Mammary epithelial cell (primary cell): ENCODE measurements at regions of chr15 and their contacts with region 1.

Region 1: DNA sequence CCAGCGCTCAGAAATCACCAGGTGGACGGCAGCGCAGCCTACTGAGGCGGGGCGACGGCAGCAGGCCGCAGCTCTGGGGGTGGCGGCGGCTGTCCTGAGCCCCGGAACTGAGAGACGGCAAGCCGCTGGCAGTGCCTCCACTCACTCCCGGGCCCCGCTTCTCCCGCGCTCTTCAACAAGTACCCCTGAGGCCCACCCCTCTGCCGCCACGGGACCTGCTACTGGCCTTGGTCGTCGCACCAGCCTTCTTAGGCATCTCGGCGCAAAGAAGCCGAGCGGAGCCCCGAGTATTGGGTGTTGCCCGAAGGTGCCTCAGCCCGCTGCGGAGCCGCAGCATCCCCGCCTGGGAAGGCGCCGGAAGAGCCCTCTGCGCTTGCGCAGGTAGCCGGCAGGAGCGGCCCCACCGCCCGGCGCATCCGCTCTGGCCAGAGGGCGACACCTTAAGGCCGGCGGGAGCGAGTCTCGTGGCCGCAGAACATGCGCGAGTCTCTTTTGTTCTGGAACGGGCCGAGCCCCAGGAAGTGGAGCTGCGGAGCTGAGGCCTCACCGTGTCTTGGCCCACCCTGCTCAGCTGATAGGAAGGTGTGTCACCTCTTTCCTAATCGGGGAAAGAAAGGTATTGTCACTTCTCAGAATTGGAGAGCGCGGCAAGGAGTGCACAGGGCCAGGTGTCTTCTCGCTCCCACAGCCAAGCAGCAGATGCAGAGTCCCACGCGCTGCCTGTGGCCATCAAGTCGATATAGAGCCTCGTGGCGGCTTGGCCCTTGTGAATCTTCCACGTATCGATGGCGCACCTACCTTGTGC is at the start of gene C15orf40:
- DNase-seq: peak; percentile 92
- H3K4me3 ChIP-seq: peak within 1 kb of the TSS; percentile 80 to 97 (median 96)
- H3K27ac ChIP-seq: peak within 1 kb of the TSS; percentile 61
- H3K4me1 ChIP-seq: peaks cover 20% of the 10 kb centered on the region
- H3K27me3 ChIP-seq: no peaks in the 10 kb centered on the region
- CTCF ChIP-seq: peak; percentile 31 to 75
- total RNA-seq, gene C15orf40: 14.7 to 28.6 TPM

Region 2: GRCh38 chr15:82919231-82919886 is 92.1 kb before region 1 on chr15:
- CTCF ChIA-PET with region 1: no interaction called
- dilution Hi-C with region 1: no loop called
- in situ Hi-C with region 1: no loop called
- intact Hi-C with region 1: no loop called
- DNase-seq: peak; percentile 81
- H3K4me3 ChIP-seq: no peak overlapping the region
- H3K27ac ChIP-seq: no peak overlapping the region
- H3K4me1 ChIP-seq: peaks cover 8% of the 10 kb centered on the region
- H3K27me3 ChIP-seq: no peaks in the 10 kb centered on the region
- CTCF ChIP-seq: no peak

Region 3: DNA sequence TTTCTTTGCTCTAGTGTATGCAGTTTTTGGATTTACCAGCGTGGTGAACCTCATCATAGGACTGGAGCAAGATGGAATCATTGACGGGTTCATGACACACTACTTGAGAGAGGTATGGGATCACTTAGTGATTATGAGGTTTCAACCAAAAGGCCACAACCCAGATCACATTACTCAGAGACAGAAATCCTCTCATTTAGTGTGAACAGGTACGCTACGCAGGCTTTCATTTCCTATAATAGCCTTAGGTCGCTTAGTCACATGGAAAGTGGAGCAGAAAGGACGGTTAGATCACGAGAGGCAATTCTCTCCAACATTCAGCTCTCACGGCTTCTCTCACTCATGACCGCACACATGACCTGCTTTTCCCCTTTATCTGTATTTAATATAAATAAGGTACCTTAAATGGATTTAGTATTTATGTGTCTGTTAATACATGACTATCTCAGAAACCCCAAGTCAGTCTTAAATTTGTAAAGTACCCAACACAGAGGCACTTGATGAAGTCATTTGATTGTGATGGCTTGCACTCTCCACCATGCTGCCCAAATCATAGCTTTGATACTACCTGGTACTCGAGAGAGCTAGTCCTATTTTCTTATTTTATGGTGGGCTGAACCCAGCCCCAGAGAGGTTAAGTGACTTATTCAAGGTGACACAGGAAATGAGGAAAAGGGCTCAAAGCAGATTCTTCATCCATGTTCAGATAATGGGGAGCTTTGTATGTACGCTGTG is 104.5 kb after region 1 on chr15:
- CTCF ChIA-PET with region 1: no interaction called
- dilution Hi-C with region 1: loop called (anchors 5 kb)
- in situ Hi-C with region 1: no loop called
- intact Hi-C with region 1: loop called (anchors 5 kb)
- DNase-seq: no peak
- H3K4me3 ChIP-seq: no peak overlapping the region
- H3K27ac ChIP-seq: no peak overlapping the region
- H3K4me1 ChIP-seq: no peaks in the 10 kb centered on the region
- H3K27me3 ChIP-seq: no peaks in the 10 kb centered on the region
- CTCF ChIP-seq: no peak

Region 4: GRCh38 chr15:83248151-83249029 is 236.9 kb after region 1 on chr15:
- CTCF ChIA-PET with region 1: interaction called, 4 read pairs
- dilution Hi-C with region 1: no loop called
- in situ Hi-C with region 1: no loop called
- intact Hi-C with region 1: loop called (anchors 5 kb)
- DNase-seq: peak; percentile 62
- H3K4me3 ChIP-seq: no peak overlapping the region
- H3K27ac ChIP-seq: no peak overlapping the region
- H3K4me1 ChIP-seq: no peaks in the 10 kb centered on the region
- H3K27me3 ChIP-seq: no peaks in the 10 kb centered on the region
- CTCF ChIP-seq: peak; percentile 81 to 87

Region 5: DNA sequence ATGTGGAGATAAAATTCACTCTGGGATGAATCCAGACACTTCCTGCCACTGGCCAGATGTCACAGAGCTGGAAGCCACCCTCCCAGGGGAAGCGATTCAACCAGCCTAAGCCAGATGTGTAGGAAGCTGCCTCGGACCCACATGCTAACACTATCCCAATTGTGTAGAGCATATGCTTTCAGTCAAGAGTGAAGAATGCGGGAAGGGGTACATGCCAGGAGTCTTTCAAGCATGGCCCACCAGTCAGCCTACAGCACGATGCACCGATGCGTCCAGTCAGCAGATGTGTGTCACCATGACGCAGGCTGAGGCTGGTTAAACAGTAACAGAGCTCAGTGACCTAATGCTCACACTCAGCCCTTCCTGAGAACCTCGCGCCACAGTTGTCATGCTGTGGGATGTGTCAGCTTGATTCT is 311.8 kb after region 1 on chr15:
- CTCF ChIA-PET with region 1: no interaction called
- dilution Hi-C with region 1: no loop called
- in situ Hi-C with region 1: no loop called
- intact Hi-C with region 1: no loop called
- DNase-seq: peak; percentile 60
- H3K4me3 ChIP-seq: no peak overlapping the region
- H3K27ac ChIP-seq: peak overlapping the region; percentile 50
- H3K4me1 ChIP-seq: peaks cover 52% of the 10 kb centered on the region
- H3K27me3 ChIP-seq: no peaks in the 10 kb centered on the region
- CTCF ChIP-seq: no peak

Region 6: DNA sequence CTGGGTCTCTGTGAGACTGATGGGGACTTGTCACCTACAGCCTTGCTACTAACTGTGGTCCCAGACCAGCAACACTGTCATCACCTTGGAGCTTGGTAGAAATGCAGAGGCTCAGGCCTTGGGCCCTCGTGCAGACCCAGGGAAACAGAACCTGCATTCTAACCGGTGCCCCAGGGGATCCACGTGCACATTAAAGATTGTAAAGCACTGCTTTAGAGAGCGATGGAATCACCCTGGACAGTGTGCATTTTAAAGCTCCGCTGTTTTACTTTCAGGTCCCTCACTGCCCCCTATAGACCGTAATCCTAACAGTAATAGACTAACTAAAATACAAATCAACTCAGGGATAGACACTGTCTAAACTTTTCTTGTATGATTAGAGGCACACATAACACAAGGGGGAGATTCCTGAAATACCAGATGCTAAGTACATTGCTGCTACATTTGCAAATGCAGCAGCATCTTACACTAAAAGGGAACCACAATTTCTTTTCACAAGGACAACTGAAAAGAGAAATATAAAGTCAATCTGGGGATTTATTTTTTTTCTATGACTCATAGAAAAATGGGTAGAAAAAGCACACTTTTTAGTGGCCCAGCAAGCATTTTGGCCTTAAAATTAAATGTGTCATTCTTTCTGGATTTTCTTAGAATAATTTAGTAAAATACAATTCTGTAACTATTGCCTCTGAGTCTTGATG is 425.1 kb after region 1 on chr15:
- CTCF ChIA-PET with region 1: no interaction called
- dilution Hi-C with region 1: no loop called
- in situ Hi-C with region 1: no loop called
- intact Hi-C with region 1: loop called (anchors 1 kb)
- DNase-seq: peak; percentile 61
- H3K4me3 ChIP-seq: no peak overlapping the region
- H3K27ac ChIP-seq: no peak overlapping the region
- H3K4me1 ChIP-seq: no peaks in the 10 kb centered on the region
- H3K27me3 ChIP-seq: no peaks in the 10 kb centered on the region
- CTCF ChIP-seq: peak; percentile 64 to 70